ENCODE measurements at regions of chr3 and their contacts with region 1.

Region 1: GRCh38 chr3:146359841-146360240 is 108.9 kb upstream of the PLSCR4 start:
- DNase-seq: no peak
- ATAC-seq: no peak
- H3K4me3 ChIP-seq: no peak overlapping the region
- H3K4me3 Mint-ChIP-seq: no peak overlapping the region
- H3K27ac ChIP-seq: no peak overlapping the region
- H3K27ac Mint-ChIP-seq: no peak overlapping the region
- H3K4me1 ChIP-seq: no peaks in the 10 kb centered on the region
- H3K4me1 Mint-ChIP-seq: no peaks in the 10 kb centered on the region
- H3K27me3 ChIP-seq: no peaks in the 10 kb centered on the region
- H3K27me3 Mint-ChIP-seq: no peaks in the 10 kb centered on the region
- CTCF ChIP-seq: no peak

Region 2: GRCh38 chr3:146035356-146035755 is 324.5 kb before region 1 on chr3:
- CTCF ChIA-PET with region 1: no interaction called
- POLR2A ChIA-PET with region 1: no interaction called
- intact Hi-C with region 1: no loop called
- DNase-seq: no peak
- ATAC-seq: no peak
- H3K4me3 ChIP-seq: no peak overlapping the region
- H3K4me3 Mint-ChIP-seq: no peak overlapping the region
- H3K27ac ChIP-seq: no peak overlapping the region
- H3K27ac Mint-ChIP-seq: no peak overlapping the region
- H3K4me1 ChIP-seq: no peaks in the 10 kb centered on the region
- H3K4me1 Mint-ChIP-seq: no peaks in the 10 kb centered on the region
- H3K27me3 ChIP-seq: no peaks in the 10 kb centered on the region
- H3K27me3 Mint-ChIP-seq: no peaks in the 10 kb centered on the region
- CTCF ChIP-seq: no peak

Region 3: GRCh38 chr3:146374146-146374545 is 14.3 kb after region 1 on chr3:
- CTCF ChIA-PET with region 1: no interaction called
- POLR2A ChIA-PET with region 1: no interaction called
- intact Hi-C with region 1: no loop called
- DNase-seq: no peak
- ATAC-seq: no peak
- H3K4me3 ChIP-seq: no peak overlapping the region
- H3K4me3 Mint-ChIP-seq: no peak overlapping the region
- H3K27ac ChIP-seq: no peak overlapping the region
- H3K27ac Mint-ChIP-seq: no peak overlapping the region
- H3K4me1 ChIP-seq: no peaks in the 10 kb centered on the region
- H3K4me1 Mint-ChIP-seq: no peaks in the 10 kb centered on the region
- H3K27me3 ChIP-seq: no peaks in the 10 kb centered on the region
- H3K27me3 Mint-ChIP-seq: no peaks in the 10 kb centered on the region
- CTCF ChIP-seq: no peak

Region 4: GRCh38 chr3:146396792-146397191 is 37.0 kb after region 1 on chr3:
- CTCF ChIA-PET with region 1: no interaction called
- POLR2A ChIA-PET with region 1: no interaction called
- intact Hi-C with region 1: loop called in 1 of 2 experiments (anchors 1 kb)
- DNase-seq: no peak
- ATAC-seq: no peak
- H3K4me3 ChIP-seq: no peak overlapping the region
- H3K4me3 Mint-ChIP-seq: no peak overlapping the region
- H3K27ac ChIP-seq: no peak overlapping the region
- H3K27ac Mint-ChIP-seq: no peak overlapping the region
- H3K4me1 ChIP-seq: no peaks in the 10 kb centered on the region
- H3K4me1 Mint-ChIP-seq: peaks cover 13% of the 10 kb centered on the region
- H3K27me3 ChIP-seq: no peaks in the 10 kb centered on the region
- H3K27me3 Mint-ChIP-seq: no peaks in the 10 kb centered on the region
- CTCF ChIP-seq: no peak

Region 5: GRCh38 chr3:146679191-146679590 is 319.4 kb after region 1 on chr3:
- CTCF ChIA-PET with region 1: no interaction called
- POLR2A ChIA-PET with region 1: no interaction called
- intact Hi-C with region 1: no loop called
- DNase-seq: no peak
- ATAC-seq: no peak
- H3K4me3 ChIP-seq: no peak overlapping the region
- H3K4me3 Mint-ChIP-seq: no peak overlapping the region
- H3K27ac ChIP-seq: no peak overlapping the region
- H3K27ac Mint-ChIP-seq: no peak overlapping the region
- H3K4me1 ChIP-seq: no peaks in the 10 kb centered on the region
- H3K4me1 Mint-ChIP-seq: no peaks in the 10 kb centered on the region
- H3K27me3 ChIP-seq: no peaks in the 10 kb centered on the region
- H3K27me3 Mint-ChIP-seq: no peaks in the 10 kb centered on the region
- CTCF ChIP-seq: no peak